ENCODE measurements at regions of chr7 and their contacts with region 1.

Region 1: GRCh38 chr7:134613623-134614347 is 32.9 kb upstream of the BPGM start:
- DNase-seq: peak; percentile 95
- ATAC-seq: peak; percentile 88
- H3K4me3 ChIP-seq: no peak overlapping the region
- H3K27ac ChIP-seq: peak overlapping the region; percentile 94
- H3K4me1 ChIP-seq: peaks cover 35% of the 10 kb centered on the region
- H3K27me3 ChIP-seq: no peaks in the 10 kb centered on the region
- CTCF ChIP-seq: no peak

Region 2: DNA sequence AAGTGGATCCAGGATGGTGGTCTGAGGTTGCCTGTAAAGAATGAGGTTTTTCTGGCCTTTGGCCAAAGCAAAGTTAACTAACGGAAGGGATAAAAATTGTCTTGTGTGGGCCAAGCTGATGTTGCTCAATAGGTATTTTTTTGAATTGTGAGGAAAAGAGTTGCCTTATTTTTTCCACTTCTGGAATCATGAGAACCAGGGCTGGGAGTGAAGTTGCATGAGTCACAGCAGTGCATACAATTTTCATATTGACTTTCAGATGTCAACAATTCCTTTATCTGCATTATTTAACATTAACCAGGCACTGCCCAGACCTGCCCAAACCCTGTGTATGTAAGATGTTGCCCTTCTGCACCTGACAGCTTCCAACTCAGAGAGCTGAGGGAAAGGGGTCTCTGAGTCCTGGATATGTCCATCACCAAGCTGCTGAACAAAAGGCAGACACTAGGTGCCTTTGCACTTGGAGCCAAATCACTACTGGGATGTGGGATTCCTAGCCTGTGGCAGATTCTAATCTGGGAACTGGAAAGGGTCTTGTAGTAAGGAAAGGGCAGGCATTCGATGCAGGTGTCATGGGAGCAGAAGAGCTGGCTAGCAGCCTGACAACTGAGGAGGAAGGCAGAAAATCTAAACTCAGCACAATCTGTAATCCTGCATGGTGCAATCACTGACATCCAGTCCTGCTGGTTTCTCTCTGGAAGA is 244.8 kb before region 1 on chr7:
- CTCF ChIA-PET with region 1: no interaction called
- POLR2A ChIA-PET with region 1: no interaction called
- intact Hi-C with region 1: loop called (anchors 1 kb)
- DNase-seq: peak; percentile 95
- ATAC-seq: peak; percentile 68
- H3K4me3 ChIP-seq: peak overlapping the region; percentile 37; the same call in 1 of the 2 replicates
- H3K27ac ChIP-seq: peak overlapping the region; percentile 96
- H3K4me1 ChIP-seq: peaks cover 55% of the 10 kb centered on the region
- H3K27me3 ChIP-seq: no peaks in the 10 kb centered on the region
- CTCF ChIP-seq: no peak

Region 3: GRCh38 chr7:134646425-134647305 is 32.9 kb after region 1 on chr7 and contains the start of gene BPGM:
- CTCF ChIA-PET with region 1: no interaction called
- POLR2A ChIA-PET with region 1: interaction called, 5 read pairs
- intact Hi-C with region 1: loop called (anchors 1 kb)
- DNase-seq: peak; percentile 99
- ATAC-seq: peak; percentile 99
- H3K4me3 ChIP-seq: peak within 1 kb of the TSS; percentile 95
- H3K27ac ChIP-seq: peak within 1 kb of the TSS; percentile 34
- H3K4me1 ChIP-seq: peaks cover 10% of the 10 kb centered on the region
- H3K27me3 ChIP-seq: no peaks in the 10 kb centered on the region
- CTCF ChIP-seq: peak; percentile 45
- total RNA-seq, gene BPGM: 9.6 and 14.6 TPM in 2 replicates

Region 4: GRCh38 chr7:135147899-135148721 is 534.3 kb after region 1 on chr7 and contains the start of gene TMEM140:
- CTCF ChIA-PET with region 1: no interaction called
- POLR2A ChIA-PET with region 1: no interaction called
- intact Hi-C with region 1: loop called (anchors 1 kb)
- DNase-seq: peak; percentile 75
- ATAC-seq: peak; percentile 80
- H3K4me3 ChIP-seq: peak within 1 kb of the TSS; percentile 64
- H3K27ac ChIP-seq: peak within 1 kb of the TSS; percentile 76
- H3K4me1 ChIP-seq: peaks cover 22% of the 10 kb centered on the region
- H3K27me3 ChIP-seq: no peaks in the 10 kb centered on the region
- CTCF ChIP-seq: no peak
- total RNA-seq, gene TMEM140: 0.52 TPM in 1 of 2 replicates, not detected in the other